Breast epithelium (tissue), 4 donors: ENCODE measurements at regions of chr7 and their contacts with region 1.

Region 1: GRCh38 chr7:30814700-30815387 is 43.6 kb downstream of the MINDY4 start:
- DNase-seq: no peak
- H3K4me3 ChIP-seq: no peak overlapping the region
- H3K27ac ChIP-seq: peak overlapping the region; percentile 33 to 89
- H3K4me1 ChIP-seq: peaks cover 8 to 13% of the 10 kb centered on the region in 2 donors
- H3K27me3 ChIP-seq: no peaks in the 10 kb centered on the region
- CTCF ChIP-seq: no peak
- POLR2A ChIP-seq: no peak

Region 2: GRCh38 chr7:30842542-30843451 is 28.0 kb after region 1 on chr7:
- intact Hi-C with region 1: no loop called
- DNase-seq: no peak
- H3K4me3 ChIP-seq: no peak overlapping the region
- H3K27ac ChIP-seq: peak overlapping the region; percentile 7 to 75
- H3K4me1 ChIP-seq: peaks cover 0 to 4% of the 10 kb centered on the region in 2 donors
- H3K27me3 ChIP-seq: no peaks in the 10 kb centered on the region
- CTCF ChIP-seq: no peak
- POLR2A ChIP-seq: no peak

Region 3: DNA sequence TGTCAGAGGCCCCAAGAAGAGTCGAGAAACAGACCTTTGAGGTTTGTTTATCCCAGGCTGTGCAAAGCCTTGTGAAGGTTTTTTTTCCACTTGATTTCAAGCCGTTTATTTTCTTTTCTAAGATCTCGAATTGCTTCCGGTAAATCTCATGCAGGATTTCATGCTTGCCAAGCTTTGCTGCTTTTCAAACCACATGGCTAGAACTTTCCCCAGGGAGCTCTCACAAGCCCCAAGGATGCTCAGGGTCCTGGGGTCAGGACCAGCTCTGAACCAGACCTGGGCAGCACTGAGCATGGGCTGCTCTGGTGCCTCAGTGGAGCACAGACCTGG is 48.8 kb after region 1 on chr7:
- intact Hi-C with region 1: no loop called
- DNase-seq: no peak
- H3K4me3 ChIP-seq: no peak overlapping the region
- H3K27ac ChIP-seq: peak overlapping the region; percentile 45 to 84
- H3K4me1 ChIP-seq: no peaks in the 10 kb centered on the region
- H3K27me3 ChIP-seq: no peaks in the 10 kb centered on the region
- CTCF ChIP-seq: no peak
- POLR2A ChIP-seq: no peak

Region 4: GRCh38 chr7:30911561-30911969 is 96.7 kb after region 1 on chr7 and contains the start of gene AQP1:
- intact Hi-C with region 1: loop called (anchors 10 kb)
- DNase-seq: peak in 1 of 2 donors; percentile 65
- H3K4me3 ChIP-seq: peak within 1 kb of the TSS; percentile 45 to 55 (median 46)
- H3K27ac ChIP-seq: peak within 1 kb of the TSS; percentile 30 to 36
- H3K4me1 ChIP-seq: peaks cover 4 to 7% of the 10 kb centered on the region in 2 donors
- H3K27me3 ChIP-seq: no peaks in the 10 kb centered on the region
- CTCF ChIP-seq: no peak
- POLR2A ChIP-seq: no peak
- total RNA-seq, gene AQP1: 132 to 213 (median 177) TPM